ENCODE measurements at regions of chr10 and their contacts with region 1.

Region 1: DNA sequence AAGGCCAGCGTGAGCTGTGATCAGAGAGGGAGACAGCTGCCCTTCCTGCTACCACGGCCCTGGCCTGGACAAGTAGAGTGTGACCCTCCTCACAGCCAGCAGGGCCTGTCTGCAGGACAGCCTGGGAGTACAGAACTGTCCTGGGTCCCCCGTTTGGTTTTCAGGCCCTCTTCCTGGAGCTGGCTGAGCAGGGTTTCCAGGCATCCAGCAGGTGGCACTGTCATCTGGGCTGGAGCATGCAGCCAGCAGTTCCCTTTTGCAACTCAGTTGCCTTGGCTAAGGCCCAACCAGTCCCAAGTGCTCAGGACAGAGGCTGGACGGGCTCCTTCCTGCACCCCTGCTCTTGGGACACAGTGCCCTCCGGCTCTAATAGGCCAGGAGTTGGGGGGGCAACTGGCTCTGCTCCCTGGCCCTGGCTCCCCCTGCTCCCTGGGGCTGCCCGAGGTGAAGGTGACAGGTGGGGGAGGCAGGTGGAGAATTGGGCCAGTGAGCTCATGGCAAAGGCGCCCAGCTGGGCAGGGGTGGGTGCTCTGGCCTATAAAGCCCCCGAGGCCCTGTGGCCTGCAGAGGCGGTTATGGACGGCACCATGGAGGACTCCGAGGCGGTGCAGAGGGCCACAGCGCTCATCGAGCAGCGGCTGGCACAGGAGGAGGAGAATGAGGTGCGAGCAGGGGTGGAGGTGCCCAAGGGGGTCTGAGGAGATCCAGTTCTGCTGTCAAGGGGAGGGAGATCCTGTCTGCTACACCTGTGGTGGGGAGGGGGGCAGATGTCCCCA is at the start of gene ANKRD2:
- DNase-seq: peak; percentile 76
- ATAC-seq: peak; percentile 84
- H3K4me3 Mint-ChIP-seq: no peak within 1 kb of the TSS
- H3K27ac Mint-ChIP-seq: no peak within 1 kb of the TSS
- H3K4me1 Mint-ChIP-seq: no peaks in the 10 kb centered on the region
- H3K27me3 Mint-ChIP-seq: no peaks in the 10 kb centered on the region
- total RNA-seq, gene ANKRD2: 0.26 TPM in 1 of 2 experiments, not detected in the other

Region 2: DNA sequence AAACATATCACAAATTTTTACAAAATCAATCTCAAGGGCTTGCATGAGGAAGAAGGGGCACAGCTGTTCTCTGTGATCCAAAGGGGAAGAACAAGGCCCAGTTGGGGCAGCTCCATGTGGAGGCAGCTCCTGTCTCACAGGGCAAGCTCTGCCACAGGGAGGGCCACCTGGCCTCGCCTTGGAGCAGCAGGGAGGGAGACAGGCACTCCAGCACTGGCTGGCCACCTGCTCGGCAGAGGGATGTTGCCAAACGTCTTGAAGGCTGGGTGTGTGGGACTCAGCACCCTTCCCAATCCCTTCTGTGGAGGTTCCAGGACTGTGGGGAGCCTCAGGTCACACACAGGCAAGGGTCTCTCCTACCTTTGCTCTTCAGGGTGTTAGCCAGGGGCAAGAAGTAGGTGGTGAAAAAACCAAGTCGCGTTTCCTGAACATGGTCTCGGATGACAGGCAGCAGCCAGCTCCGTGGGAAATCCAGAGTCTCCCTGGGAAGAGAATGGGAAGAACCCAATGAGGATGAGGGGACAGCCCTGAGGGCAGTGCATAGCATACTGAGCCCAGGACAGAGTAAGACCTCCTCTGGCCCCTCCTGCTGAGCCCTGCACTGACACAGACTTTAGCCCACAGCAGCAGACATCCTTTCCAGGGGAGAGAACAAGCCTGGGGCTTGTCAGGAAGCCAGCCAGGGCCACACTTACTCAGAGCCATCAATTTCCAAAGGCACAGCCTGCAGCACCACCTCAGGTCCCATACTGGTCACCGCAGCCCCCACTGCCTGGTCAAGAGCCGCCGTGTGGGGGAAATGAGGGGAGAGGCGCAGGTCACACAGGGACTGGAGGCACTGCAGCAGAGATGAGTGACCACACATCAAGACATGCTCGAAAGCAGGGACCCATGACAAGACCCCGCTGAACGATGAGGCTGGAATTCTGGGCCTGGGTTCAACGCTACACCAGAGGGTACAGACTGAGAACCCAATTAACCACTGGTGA is 193.2 kb before region 1 on chr10:
- CTCF ChIA-PET with region 1: no interaction called
- POLR2A ChIA-PET with region 1: no interaction called
- DNase-seq: no peak
- ATAC-seq: no peak
- H3K4me3 Mint-ChIP-seq: no peak overlapping the region
- H3K27ac Mint-ChIP-seq: peak overlapping the region; percentile 30
- H3K4me1 Mint-ChIP-seq: peaks cover 4% of the 10 kb centered on the region
- H3K27me3 Mint-ChIP-seq: no peaks in the 10 kb centered on the region

Region 3: DNA sequence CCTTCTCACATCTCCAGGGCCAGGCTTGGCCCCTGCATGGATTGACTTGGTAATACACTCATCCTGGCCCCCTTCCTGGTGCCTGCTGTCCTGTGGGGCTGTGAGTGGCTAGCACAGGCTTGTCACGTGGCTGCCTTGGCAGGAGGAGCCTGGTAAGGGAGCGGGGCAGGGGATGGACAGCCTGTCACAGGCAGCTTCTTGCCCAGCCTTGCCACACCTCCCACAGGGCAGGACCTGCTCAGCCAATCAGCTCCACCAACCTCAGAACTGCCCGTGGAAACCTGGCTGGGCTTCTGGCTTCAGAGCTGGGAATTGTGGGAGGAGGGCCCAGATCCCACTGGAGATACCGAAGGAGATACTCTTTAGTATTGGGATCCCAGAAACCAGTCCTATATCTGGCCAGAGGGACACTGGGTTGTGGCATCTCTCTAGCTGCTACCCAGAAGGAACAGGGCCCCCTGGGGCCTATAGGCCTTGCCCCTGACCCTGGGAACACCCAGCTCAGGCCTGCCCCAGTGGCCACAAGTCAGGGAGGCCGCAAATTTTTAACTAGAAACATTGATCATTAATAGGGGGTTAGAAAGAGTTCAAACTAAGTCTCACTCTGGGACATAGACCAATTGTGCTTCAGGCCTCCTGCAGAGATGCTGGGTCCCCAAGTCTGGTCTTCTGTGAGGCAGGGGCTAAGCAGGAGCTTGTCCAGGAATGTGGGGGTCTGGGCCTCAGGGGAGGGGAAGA is 11.8 kb after region 1 on chr10 and contains the start of gene HOGA1:
- CTCF ChIA-PET with region 1: interaction called, 12 read pairs
- POLR2A ChIA-PET with region 1: no interaction called
- DNase-seq: no peak
- ATAC-seq: no peak
- H3K4me3 Mint-ChIP-seq: no peak within 1 kb of the TSS
- H3K27ac Mint-ChIP-seq: no peak within 1 kb of the TSS
- H3K4me1 Mint-ChIP-seq: peaks cover 2% of the 10 kb centered on the region
- H3K27me3 Mint-ChIP-seq: peaks cover 5% of the 10 kb centered on the region
- total RNA-seq, gene HOGA1: not detected

Region 4: DNA sequence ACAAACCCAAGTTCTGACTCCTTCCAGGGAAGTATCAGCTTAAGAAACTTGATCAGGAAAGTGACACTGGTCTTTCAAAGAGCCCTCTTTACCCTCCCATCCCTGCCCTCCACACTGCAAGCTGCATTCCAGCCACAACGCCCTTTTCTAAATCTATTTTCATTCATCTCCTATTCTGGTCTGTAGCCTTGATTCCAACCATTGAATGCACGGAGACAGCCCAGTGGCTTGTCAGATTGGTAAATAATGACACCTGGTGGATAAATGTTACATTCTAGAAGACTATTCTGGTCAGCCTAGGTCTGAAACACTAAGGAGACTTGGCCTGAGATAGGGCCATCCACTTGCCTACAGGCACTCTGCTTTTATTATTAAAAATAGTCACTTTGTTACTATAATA is 40.0 kb after region 1 on chr10:
- CTCF ChIA-PET with region 1: interaction called, 18 read pairs
- POLR2A ChIA-PET with region 1: no interaction called
- DNase-seq: no peak
- ATAC-seq: peak; percentile 58
- H3K4me3 Mint-ChIP-seq: no peak overlapping the region
- H3K27ac Mint-ChIP-seq: no peak overlapping the region
- H3K4me1 Mint-ChIP-seq: no peaks in the 10 kb centered on the region
- H3K27me3 Mint-ChIP-seq: no peaks in the 10 kb centered on the region

Measured in activated CD8-positive, alpha-beta T cell treated with anti-CD3 and anti-CD28 coated beads, Interleukin-2, amount 10 ng/mL, durations not matched to agents 7 days and 5 days (primary cell).